T-cell (primary cell): ENCODE measurements at regions of chr2 and their contacts with region 1.

Region 1: GRCh38 chr2:99536165-99536564 is 46.3 kb upstream of the REV1 start:
- DNase-seq: no peak
- ATAC-seq: no peak
- H3K4me3 ChIP-seq: no peak overlapping the region
- H3K4me3 Mint-ChIP-seq: no peak overlapping the region
- H3K27ac ChIP-seq: no peak overlapping the region
- H3K27ac Mint-ChIP-seq: no peak overlapping the region
- H3K4me1 ChIP-seq: no peaks in the 10 kb centered on the region
- H3K4me1 Mint-ChIP-seq: no peaks in the 10 kb centered on the region
- H3K27me3 ChIP-seq: peaks cover 0 to 21% of the 10 kb centered on the region in 2 experiments
- H3K27me3 Mint-ChIP-seq: peaks cover 16 to 17% of the 10 kb centered on the region in 2 donors

Region 2: GRCh38 chr2:99066075-99066958 is 469.8 kb before region 1 on chr2:
- CTCF ChIA-PET with region 1: no interaction called
- POLR2A ChIA-PET with region 1: interaction called in 1 of 2 experiments, 10 read pairs
- DNase-seq: peak in 11 of 35 experiments; percentile 3 to 71 (median 13)
- ATAC-seq: peak; percentile 78 to 99 (median 90)
- H3K4me3 ChIP-seq: no peak overlapping the region
- H3K4me3 Mint-ChIP-seq: no peak overlapping the region
- H3K27ac ChIP-seq: no peak overlapping the region
- H3K27ac Mint-ChIP-seq: no peak overlapping the region
- H3K4me1 ChIP-seq: peaks cover 4 to 17% of the 10 kb centered on the region in 2 experiments
- H3K4me1 Mint-ChIP-seq: peaks cover 0 to 8% (median 2%) of the 10 kb centered on the region in 3 donors
- H3K27me3 ChIP-seq: no peaks in the 10 kb centered on the region
- H3K27me3 Mint-ChIP-seq: no peaks in the 10 kb centered on the region

Region 3: GRCh38 chr2:99458529-99458928 is 77.6 kb before region 1 on chr2:
- CTCF ChIA-PET with region 1: no interaction called
- POLR2A ChIA-PET with region 1: no interaction called
- DNase-seq: no peak
- ATAC-seq: no peak
- H3K4me3 ChIP-seq: no peak overlapping the region
- H3K4me3 Mint-ChIP-seq: no peak overlapping the region
- H3K27ac ChIP-seq: no peak overlapping the region
- H3K27ac Mint-ChIP-seq: no peak overlapping the region
- H3K4me1 ChIP-seq: no peaks in the 10 kb centered on the region
- H3K4me1 Mint-ChIP-seq: peaks cover 5 to 11% (median 7%) of the 10 kb centered on the region in 3 donors
- H3K27me3 ChIP-seq: no peaks in the 10 kb centered on the region
- H3K27me3 Mint-ChIP-seq: no peaks in the 10 kb centered on the region